Right ventricle myocardium superior (tissue), 1 donor: ENCODE measurements at regions of chr3 and their contacts with region 1.

Region 1: DNA sequence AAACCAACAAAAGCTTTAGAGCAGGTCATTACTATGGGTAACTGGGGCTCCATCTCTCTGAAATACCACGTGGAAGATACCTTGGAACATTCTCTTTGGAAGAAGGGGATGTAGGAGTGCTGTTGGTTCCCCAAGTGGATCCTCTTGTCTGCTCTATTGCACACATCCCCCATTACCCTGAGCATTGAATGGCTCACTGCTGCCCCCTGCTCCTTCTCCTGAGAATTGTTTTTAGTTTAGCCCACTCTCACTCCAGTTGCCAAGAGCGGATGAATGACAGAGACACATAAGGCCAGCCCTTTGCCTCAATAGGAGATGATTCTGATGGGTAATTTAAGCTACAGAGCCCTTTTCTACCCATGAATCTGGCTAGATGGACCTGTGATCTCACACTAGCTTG is 135.6 kb upstream of the SUCLG2 start:
- DNase-seq: no peak
- ATAC-seq: peak; percentile 52

Region 2: DNA sequence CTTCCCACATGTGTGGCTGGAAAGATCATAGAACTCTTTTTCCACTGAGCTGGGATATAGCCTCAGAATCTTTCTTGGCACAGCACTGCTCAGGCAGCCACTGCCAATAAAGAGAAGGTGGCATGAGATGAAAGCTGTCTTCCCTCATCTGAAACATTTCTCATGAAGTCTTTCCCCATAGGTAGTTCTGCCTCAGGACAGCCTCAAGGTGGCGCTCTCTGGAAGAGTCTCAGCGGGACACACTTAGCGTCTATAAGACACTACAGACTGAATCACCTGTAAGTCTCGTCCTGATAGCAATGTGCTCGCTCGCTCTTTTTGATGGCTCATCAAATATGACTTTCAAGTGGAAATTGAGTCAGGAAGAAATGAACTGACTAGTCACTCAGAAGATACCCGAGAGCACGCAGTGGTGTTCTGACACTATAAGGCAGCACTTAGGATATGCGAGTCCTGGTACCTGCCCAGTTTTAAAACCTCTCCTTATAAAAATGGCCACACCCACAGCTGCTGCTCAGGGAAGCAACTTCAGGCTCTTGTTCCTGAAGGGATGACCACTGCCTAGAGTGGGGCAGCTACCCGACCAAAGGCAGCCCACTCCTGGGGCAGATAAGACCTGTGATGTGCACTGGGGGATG is 405.2 kb before region 1 on chr3:
- intact Hi-C with region 1: loop called (anchors 10 kb)
- DNase-seq: no peak
- ATAC-seq: peak; percentile 80

Region 3: GRCh38 chr3:67605377-67605776 is 184.7 kb before region 1 on chr3:
- intact Hi-C with region 1: no loop called
- DNase-seq: no peak
- ATAC-seq: no peak

Region 4: GRCh38 chr3:67737140-67737539 is 52.9 kb before region 1 on chr3:
- intact Hi-C with region 1: no loop called
- DNase-seq: no peak
- ATAC-seq: no peak

Region 5: DNA sequence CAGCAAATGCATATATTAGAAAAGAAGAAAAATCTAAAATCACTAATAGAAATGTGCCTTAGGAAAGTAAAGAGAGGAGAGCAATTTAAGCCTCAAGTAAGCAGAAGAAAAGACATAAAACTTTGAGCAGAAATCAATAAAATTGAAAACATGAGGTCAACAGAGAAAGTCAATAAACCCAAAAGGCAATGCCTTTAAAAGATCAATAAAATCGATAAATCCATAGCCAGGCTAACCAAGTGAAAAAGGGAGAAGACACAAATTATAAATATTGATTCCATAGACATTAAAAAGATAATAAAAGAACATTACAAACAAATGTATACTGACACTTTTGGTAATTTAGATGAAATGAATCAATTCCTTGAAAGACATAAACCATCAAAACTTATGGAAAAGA is 34.4 kb before region 1 on chr3:
- intact Hi-C with region 1: no loop called
- DNase-seq: no peak
- ATAC-seq: no peak

Region 6: DNA sequence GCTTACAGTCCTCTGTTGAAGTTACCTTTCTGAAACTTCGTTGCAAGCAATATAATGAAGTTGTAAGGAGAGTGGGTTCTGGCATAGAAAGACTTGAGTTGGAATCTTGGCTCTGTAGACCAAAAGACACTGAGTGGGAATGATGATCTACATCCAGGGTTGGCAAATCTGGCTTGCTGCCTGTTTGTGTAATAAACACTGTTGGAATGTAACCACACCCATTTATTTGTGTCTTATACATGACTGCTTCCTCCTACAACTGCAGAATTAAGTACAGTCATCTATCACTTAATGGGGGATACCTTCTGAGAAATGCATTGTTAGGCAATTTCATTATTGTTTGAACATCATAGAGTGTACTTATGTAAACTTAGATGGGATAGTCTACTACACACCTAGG is 42.8 kb after region 1 on chr3:
- intact Hi-C with region 1: no loop called
- DNase-seq: no peak
- ATAC-seq: no peak